HCT116 (cell line): ENCODE measurements at regions of chr2 and their contacts with region 1.

Region 1: GRCh38 chr2:43226558-43226954 is at the start of gene ZFP36L2:
- DNase-seq: peak; percentile 86
- ATAC-seq: peak; percentile 75
- H3K4me3 ChIP-seq: peak within 1 kb of the TSS; percentile 84 to 88
- H3K27ac ChIP-seq: peak within 1 kb of the TSS; percentile 96
- H3K4me1 ChIP-seq: peaks cover 43 to 47% of the 10 kb centered on the region in 2 experiments
- H3K27me3 ChIP-seq: no peaks in the 10 kb centered on the region
- CTCF ChIP-seq: no peak
- POLR2A ChIP-seq: peak; percentile 66
- RAD21 ChIP-seq: no peak
- total RNA-seq, gene ZFP36L2: 30.3 TPM

Region 2: DNA sequence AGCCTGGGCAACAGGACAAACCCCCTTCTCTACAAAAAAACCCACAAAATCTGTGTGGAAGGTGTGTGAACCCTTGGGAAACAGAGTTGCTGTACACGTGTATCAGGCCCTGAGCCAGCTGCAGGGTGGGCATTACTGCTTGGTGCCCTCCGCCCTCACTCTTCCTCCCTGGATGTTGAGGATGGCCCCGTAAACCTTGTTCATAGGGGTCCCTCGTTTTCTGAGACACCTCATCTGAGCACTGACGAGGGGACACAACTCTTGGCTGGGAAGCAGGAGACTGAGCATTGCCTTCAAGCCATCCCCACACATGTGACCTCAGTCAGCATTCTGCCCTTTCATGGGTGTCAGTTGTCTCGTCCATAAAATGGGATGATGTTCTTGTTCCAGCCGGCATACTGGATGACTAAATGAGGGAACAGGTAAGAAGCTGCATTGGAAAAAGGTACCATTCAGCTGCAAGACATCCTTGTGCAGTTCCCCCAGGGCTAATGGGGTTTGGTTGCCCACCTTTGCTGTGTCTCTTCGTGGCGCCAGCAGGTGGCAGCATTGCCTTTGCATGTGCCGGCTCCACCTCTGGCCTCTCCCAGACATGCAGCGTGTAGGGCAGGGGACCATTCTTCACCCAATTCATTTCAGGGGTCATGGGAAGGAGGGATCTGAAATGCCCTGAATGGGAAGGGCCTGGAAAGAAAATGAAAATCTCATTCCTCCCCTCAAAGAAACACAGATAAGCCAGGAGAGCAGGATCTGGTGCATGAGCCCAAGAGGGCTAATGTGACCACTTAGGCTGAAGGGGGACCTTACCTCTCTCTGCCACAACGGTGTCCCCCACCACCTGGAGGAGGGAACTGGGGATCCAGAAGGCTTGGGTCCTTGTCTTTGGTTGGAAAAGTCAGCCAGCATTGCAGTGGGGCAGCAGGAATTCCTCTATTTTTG is 397.8 kb before region 1 on chr2:
- CTCF ChIA-PET with region 1: interaction called, 4 read pairs
- POLR2A ChIA-PET with region 1: no interaction called
- RAD21 ChIA-PET with region 1: no interaction called
- intact Hi-C with region 1: loop called (anchors 1 kb)
- DNase-seq: peak; percentile 54
- ATAC-seq: peak; percentile 86
- H3K4me3 ChIP-seq: no peak overlapping the region
- H3K27ac ChIP-seq: no peak overlapping the region
- H3K4me1 ChIP-seq: peaks cover 0 to 12% of the 10 kb centered on the region in 2 experiments; a peak in 1 of 4 replicates
- H3K27me3 ChIP-seq: no peaks in the 10 kb centered on the region
- CTCF ChIP-seq: peak; percentile 75 to 92 (median 90)
- POLR2A ChIP-seq: no peak
- RAD21 ChIP-seq: peak; percentile 82

Region 3: GRCh38 chr2:42944779-42945415 is 281.7 kb before region 1 on chr2:
- CTCF ChIA-PET with region 1: interaction called, 12 read pairs
- POLR2A ChIA-PET with region 1: interaction called, 3 read pairs
- RAD21 ChIA-PET with region 1: no interaction called
- intact Hi-C with region 1: loop called (anchors 1 kb)
- DNase-seq: peak; percentile 15
- ATAC-seq: peak; percentile 82
- H3K4me3 ChIP-seq: no peak overlapping the region
- H3K27ac ChIP-seq: no peak overlapping the region
- H3K4me1 ChIP-seq: no peaks in the 10 kb centered on the region
- H3K27me3 ChIP-seq: no peaks in the 10 kb centered on the region
- CTCF ChIP-seq: no peak
- POLR2A ChIP-seq: no peak
- RAD21 ChIP-seq: no peak

Region 4: DNA sequence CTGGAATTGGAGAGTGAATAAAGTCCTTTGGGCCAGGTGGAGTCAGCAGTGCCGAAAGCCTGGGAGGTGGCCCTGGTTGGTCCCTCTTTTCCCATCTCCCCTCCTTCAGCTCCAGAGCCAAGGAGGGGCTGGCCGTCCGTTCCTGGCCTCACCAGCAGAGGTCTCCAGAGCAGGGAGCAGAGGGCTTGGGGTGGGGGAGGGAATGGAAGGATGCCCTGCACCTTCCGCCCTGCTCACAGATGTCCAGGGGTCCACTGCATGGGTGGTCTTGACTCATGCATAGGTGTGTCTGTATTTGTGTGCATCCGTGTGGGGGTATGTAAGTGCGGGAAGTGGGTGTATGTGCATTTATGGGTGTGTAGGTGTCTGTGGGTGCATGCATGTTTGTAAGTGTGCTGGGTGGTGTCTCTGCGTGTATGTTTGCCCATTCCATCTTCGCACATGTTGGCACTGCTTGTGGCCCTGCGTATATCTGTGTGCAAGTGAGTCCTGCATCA is 202.0 kb before region 1 on chr2:
- CTCF ChIA-PET with region 1: interaction called, 6 read pairs
- POLR2A ChIA-PET with region 1: interaction called, 3 read pairs
- RAD21 ChIA-PET with region 1: interaction called in 1 of 2 experiments, 3 read pairs
- intact Hi-C with region 1: loop called (anchors 5 kb)
- DNase-seq: peak; percentile 12
- ATAC-seq: peak; percentile 96
- H3K4me3 ChIP-seq: no peak overlapping the region
- H3K27ac ChIP-seq: no peak overlapping the region
- H3K4me1 ChIP-seq: no peaks in the 10 kb centered on the region
- H3K27me3 ChIP-seq: 0 out of 2 replicates have a peak, but pooled peaks cover 2% of the 10 kb centered on the region
- CTCF ChIP-seq: peak; percentile 75 to 84 (median 81)
- POLR2A ChIP-seq: no peak
- RAD21 ChIP-seq: peak; percentile 90

Region 5: GRCh38 chr2:43178602-43179542 is 47.7 kb before region 1 on chr2:
- CTCF ChIA-PET with region 1: interaction called, 3 read pairs
- POLR2A ChIA-PET with region 1: interaction called, 9 read pairs
- RAD21 ChIA-PET with region 1: no interaction called
- intact Hi-C with region 1: loop called (anchors 5 kb)
- DNase-seq: peak; percentile 64
- ATAC-seq: peak; percentile 86
- H3K4me3 ChIP-seq: peak overlapping the region; percentile 27 to 35
- H3K27ac ChIP-seq: peak overlapping the region; percentile 91
- H3K4me1 ChIP-seq: peaks cover 33 to 79% of the 10 kb centered on the region in 2 experiments
- H3K27me3 ChIP-seq: no peaks in the 10 kb centered on the region
- CTCF ChIP-seq: no peak
- POLR2A ChIP-seq: no peak
- RAD21 ChIP-seq: no peak

Region 6: GRCh38 chr2:43343573-43344304 is 117.2 kb after region 1 on chr2:
- CTCF ChIA-PET with region 1: no interaction called
- POLR2A ChIA-PET with region 1: no interaction called
- RAD21 ChIA-PET with region 1: no interaction called
- intact Hi-C with region 1: no loop called
- DNase-seq: no peak
- ATAC-seq: no peak
- H3K4me3 ChIP-seq: no peak overlapping the region
- H3K27ac ChIP-seq: no peak overlapping the region
- H3K4me1 ChIP-seq: peaks cover 13 to 18% of the 10 kb centered on the region in 2 experiments
- H3K27me3 ChIP-seq: no peaks in the 10 kb centered on the region
- CTCF ChIP-seq: no peak
- POLR2A ChIP-seq: no peak
- RAD21 ChIP-seq: no peak

Region 7: GRCh38 chr2:43542285-43542937 is 315.9 kb after region 1 on chr2:
- CTCF ChIA-PET with region 1: interaction called, 3 read pairs
- POLR2A ChIA-PET with region 1: no interaction called
- RAD21 ChIA-PET with region 1: no interaction called
- intact Hi-C with region 1: loop called (anchors 5 kb)
- DNase-seq: peak; percentile 18
- ATAC-seq: peak; percentile 59
- H3K4me3 ChIP-seq: no peak overlapping the region
- H3K27ac ChIP-seq: no peak overlapping the region
- H3K4me1 ChIP-seq: no peaks in the 10 kb centered on the region
- H3K27me3 ChIP-seq: no peaks in the 10 kb centered on the region
- CTCF ChIP-seq: peak; percentile 24 to 60 (median 54); a peak in 3 of 6 replicates
- POLR2A ChIP-seq: no peak
- RAD21 ChIP-seq: peak; percentile 73